A673 (cell line): ENCODE measurements at regions of chr20 and their contacts with region 1.

Region 1: GRCh38 chr20:50115591-50116372 is 2.8 kb upstream of the UBE2V1 start:
- DNase-seq: peak; percentile 98
- H3K4me3 ChIP-seq: peak overlapping the region; percentile 51
- H3K27ac ChIP-seq: peak overlapping the region; percentile 64
- H3K4me1 ChIP-seq: peaks cover 23% of the 10 kb centered on the region
- H3K27me3 ChIP-seq: no peaks in the 10 kb centered on the region
- CTCF ChIP-seq: no peak

Region 2: DNA sequence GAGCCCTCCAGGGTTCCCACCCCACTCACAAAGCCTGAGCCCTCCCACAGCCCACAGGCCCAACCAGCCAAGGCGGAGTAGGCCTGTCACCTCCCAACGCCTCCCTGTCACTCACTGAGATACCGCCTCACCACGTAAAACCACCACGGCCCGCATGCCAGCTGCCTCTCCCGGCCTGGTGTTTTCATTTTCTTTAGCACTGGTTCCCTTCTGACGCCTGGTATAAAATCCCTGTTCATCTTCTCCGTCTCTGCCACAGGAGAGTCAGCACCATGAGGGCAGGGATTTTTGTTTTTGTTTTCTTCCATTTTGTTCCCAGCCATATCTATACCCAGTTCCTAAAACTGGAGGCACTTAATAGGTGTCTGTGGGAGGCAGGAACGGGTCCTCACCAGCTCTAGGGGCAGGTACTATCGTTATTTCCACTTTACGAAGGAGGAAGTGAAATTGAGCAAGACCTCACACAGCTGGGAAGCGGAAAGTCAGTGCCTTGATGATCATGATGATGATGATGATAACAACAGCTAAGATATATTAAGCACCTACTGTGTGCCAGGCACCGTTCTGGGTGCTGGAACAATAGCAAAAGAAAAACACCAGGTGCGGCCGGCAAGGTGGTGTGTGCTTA is 74.4 kb before region 1 on chr20:
- CTCF ChIA-PET with region 1: no interaction called
- POLR2A ChIA-PET with region 1: interaction called, 12 read pairs
- intact Hi-C with region 1: no loop called
- DNase-seq: no peak
- H3K4me3 ChIP-seq: no peak overlapping the region
- H3K27ac ChIP-seq: no peak overlapping the region
- H3K4me1 ChIP-seq: peaks cover 1% of the 10 kb centered on the region
- H3K27me3 ChIP-seq: no peaks in the 10 kb centered on the region
- CTCF ChIP-seq: no peak

Region 3: DNA sequence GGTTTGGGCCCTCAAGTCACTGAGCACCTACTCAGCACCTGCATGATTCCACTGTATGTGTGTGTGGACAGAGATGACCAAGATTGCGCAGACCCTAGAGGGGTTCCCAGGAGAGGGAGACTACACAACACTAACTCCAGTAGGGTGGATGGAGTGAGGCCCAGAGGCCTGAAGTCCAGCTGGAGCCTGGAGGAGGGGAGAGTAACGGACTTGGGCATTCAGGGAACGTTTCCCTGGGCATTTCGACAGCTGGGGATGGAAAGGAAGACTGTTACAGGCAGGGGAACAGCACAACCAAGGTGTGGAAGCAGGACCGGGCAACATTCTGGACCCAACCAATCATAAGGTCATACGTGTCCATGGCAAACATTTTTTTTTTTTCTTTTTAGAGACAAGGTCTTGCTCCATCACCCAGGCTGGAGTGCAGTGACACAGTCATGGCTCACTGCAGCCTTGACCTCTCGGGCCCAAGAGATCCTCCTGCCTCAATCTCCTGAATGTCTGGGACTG is 63.8 kb after region 1 on chr20:
- CTCF ChIA-PET with region 1: interaction called, 10 read pairs
- POLR2A ChIA-PET with region 1: interaction called, 7 read pairs
- intact Hi-C with region 1: no loop called
- DNase-seq: no peak
- H3K4me3 ChIP-seq: no peak overlapping the region
- H3K27ac ChIP-seq: no peak overlapping the region
- H3K4me1 ChIP-seq: peaks cover 6% of the 10 kb centered on the region
- H3K27me3 ChIP-seq: no peaks in the 10 kb centered on the region
- CTCF ChIP-seq: no peak; the same call in 1 of the 2 replicates

Region 4: GRCh38 chr20:50450881-50451752 is 335.3 kb after region 1 on chr20:
- CTCF ChIA-PET with region 1: no interaction called
- POLR2A ChIA-PET with region 1: interaction called, 12 read pairs
- intact Hi-C with region 1: no loop called
- DNase-seq: peak; percentile 51
- H3K4me3 ChIP-seq: peak overlapping the region; percentile 16
- H3K27ac ChIP-seq: peak overlapping the region; percentile 83
- H3K4me1 ChIP-seq: peaks cover 28% of the 10 kb centered on the region
- H3K27me3 ChIP-seq: no peaks in the 10 kb centered on the region
- CTCF ChIP-seq: no peak

Region 5: DNA sequence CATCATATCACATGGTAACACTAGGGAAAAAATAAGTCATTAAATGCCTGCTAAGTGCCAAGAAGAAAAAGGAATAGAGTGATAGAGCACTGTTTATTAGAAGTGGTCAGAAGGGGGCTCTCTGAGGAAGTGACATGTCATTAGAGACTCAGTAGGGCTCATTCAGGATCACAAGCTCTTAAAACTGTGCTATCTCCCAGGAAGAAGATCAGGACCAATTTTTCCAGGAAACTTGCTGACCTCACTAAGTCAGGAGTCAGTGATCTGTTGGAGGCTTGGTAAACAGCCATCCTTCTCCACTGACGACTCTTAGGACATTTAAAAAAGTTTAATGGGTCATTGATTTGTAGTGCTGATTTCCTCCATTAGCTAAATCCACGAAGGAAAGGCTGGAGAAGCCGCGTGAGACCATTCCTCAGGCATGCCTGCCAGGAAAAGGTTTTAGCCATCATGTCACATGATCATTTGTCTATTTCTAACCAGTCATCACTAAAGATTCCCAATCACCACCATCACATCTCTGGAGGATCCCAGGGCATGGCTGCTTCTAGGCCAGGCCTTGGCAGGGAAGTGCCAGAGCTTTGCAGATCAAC is 388.5 kb after region 1 on chr20:
- CTCF ChIA-PET with region 1: no interaction called
- POLR2A ChIA-PET with region 1: no interaction called
- intact Hi-C with region 1: no loop called
- DNase-seq: no peak
- H3K4me3 ChIP-seq: no peak overlapping the region
- H3K27ac ChIP-seq: no peak overlapping the region
- H3K4me1 ChIP-seq: peaks cover 2% of the 10 kb centered on the region
- H3K27me3 ChIP-seq: no peaks in the 10 kb centered on the region
- CTCF ChIP-seq: peak; percentile 32